ENCODE measurements at regions of chr6 and their contacts with region 1.

Region 1: GRCh38 chr6:133837801-133838349 is 51.0 kb upstream of the TCF21 start:
- DNase-seq: peak; percentile 80

Region 2: GRCh38 chr6:132598473-132598872 is 1239.4 kb before region 1 on chr6:
- intact Hi-C with region 1: no loop called
- DNase-seq: no peak

Region 3: GRCh38 chr6:133577851-133578250 is 260.0 kb before region 1 on chr6:
- intact Hi-C with region 1: loop called in 1 of 2 experiments (anchors 10 kb)
- DNase-seq: no peak

Region 4: GRCh38 chr6:133854364-133855275 is 16.7 kb after region 1 on chr6:
- intact Hi-C with region 1: no loop called
- DNase-seq: no peak

Region 5: DNA sequence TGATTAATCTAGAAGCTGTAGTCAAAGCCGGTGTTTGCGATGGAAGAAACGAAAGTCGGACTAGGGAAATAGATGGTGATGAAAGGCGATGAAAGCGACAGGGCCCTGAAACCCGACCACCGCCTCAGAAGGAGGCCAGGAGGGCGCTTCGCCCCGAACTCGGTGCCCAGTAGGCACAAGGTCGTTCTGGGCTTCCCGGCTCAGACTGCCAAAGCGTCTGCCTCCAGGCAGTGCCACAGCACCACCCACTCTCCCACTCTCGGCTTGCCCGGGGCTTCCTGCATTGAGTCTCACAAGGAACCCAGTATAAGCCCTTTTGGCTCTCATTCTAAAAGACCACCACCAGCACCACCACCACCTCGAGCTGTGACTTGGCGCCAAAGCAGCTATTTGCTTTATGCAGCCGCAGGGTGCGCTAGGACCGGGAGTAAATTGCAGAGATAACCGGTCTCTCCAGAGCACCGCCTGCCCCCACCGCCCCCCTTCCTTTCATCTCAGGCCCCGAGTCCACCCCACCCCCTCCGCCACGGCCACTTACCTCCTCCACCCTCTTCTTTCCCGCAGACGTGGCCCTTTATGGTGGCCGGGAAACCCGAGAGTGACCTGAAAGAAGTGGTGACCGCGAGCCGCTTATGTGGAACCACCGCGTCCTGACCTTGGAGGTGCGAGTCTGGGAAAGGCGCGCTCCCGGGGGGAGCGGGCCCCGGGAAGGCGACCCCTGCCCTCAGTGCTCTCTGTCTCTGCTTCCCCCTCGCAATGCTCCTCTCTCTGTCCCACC is 53.5 kb after region 1 on chr6:
- intact Hi-C with region 1: loop called in 1 of 2 experiments (anchors 10 kb)
- DNase-seq: peak; percentile 79